HEK293 (cell line): ENCODE measurements at regions of chr11 and their contacts with region 1.

Region 1: GRCh38 chr11:13970986-13971385 is 8.5 kb downstream of the SPON1 start:
- H3K4me3 ChIP-seq: no peak overlapping the region
- H3K27ac ChIP-seq: no peak overlapping the region
- H3K4me1 ChIP-seq: no peaks in the 10 kb centered on the region
- CTCF ChIP-seq: peak; percentile 54

Region 2: DNA sequence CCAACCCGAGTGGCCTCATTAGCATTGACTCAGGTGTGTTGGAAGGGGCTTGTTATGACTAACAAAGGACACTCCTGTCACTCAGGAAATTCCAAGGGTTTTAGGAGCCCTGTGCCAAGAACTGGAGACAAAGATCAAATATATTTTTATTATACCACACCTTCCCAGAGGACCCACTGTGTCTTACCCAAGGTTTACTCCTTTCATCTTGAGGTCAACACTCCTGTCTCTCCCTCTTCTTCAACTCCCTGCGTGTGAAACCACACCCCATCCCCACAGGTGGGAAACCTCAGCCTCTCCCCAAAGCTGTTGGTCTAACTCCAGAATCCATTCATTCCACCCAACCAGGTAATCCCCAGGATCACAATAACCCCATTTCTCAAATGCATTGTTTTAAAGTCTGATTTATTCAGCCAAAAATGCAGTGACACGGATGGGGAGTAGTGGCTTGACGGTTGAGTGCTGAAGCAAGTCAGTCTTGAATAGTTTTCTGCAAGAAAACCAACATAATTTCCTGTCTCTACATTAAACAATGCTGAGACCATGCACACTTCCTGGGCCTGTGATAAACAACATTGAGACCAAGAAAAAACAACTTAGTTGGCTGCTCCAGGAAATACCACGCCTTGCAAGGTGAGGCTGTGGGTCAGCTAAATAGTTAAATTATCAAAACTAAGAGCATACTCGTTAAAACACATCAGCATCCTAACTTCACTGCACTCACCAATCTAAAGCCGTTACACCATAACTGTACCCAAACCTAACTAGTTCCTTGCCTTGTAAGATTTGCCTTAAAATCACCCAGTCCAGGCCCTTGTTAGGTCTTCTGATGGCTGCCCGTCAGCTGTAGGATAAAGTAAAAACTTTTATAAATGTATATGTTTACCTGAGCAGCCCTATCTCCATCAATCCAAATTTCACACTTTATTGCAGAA is 47.0 kb before region 1 on chr11:
- CTCF ChIA-PET with region 1: no interaction called
- POLR2A ChIA-PET with region 1: no interaction called
- H3K4me3 ChIP-seq: no peak overlapping the region
- H3K27ac ChIP-seq: no peak overlapping the region
- H3K4me1 ChIP-seq: no peaks in the 10 kb centered on the region
- CTCF ChIP-seq: no peak

Region 3: DNA sequence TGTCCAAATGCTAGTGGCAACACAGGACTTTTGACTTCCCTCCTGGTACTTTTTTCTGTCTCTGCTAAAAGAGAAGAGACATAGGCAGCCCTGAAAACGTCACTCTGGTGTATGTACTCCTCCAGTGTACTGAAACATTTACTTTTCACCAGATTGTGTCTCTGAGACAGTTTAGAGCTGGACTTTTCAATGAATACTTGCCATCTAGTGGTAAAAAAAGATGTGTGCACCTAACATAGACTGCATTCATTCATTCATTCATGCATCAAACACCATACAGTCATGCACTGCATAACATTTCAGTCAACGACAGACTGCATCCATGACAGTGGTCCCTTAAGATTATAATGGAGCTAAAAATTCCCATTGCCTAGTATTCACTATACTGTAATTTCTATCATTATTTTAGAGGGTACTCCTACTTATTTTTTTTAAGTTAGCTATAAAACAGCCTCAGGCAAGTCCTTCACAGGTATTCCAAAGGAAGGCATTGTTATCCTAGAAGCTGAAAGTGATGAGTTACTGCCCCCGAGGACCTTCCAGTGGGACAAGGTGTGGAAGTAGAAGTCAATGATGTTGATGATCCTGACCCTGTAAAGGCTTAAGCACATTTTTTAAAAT is 177.8 kb after region 1 on chr11:
- CTCF ChIA-PET with region 1: interaction called, 40 read pairs
- POLR2A ChIA-PET with region 1: no interaction called
- H3K4me3 ChIP-seq: no peak overlapping the region
- H3K27ac ChIP-seq: no peak overlapping the region
- H3K4me1 ChIP-seq: no peaks in the 10 kb centered on the region
- CTCF ChIP-seq: no peak

Region 4: GRCh38 chr11:14202251-14203196 is 231.5 kb after region 1 on chr11:
- CTCF ChIA-PET with region 1: no interaction called
- POLR2A ChIA-PET with region 1: no interaction called
- H3K4me3 ChIP-seq: no peak overlapping the region
- H3K27ac ChIP-seq: no peak overlapping the region
- H3K4me1 ChIP-seq: no peaks in the 10 kb centered on the region
- CTCF ChIP-seq: no peak